IMR-90 (cell line): ENCODE measurements at regions of chr1 and their contacts with region 1.

Region 1: GRCh38 chr1:181479137-181479745 is 4.1 kb upstream of the CACNA1E start:
- DNase-seq: peak; percentile 71
- ATAC-seq: peak; percentile 95
- H3K4me3 ChIP-seq: no peak overlapping the region
- H3K27ac ChIP-seq: no peak overlapping the region
- H3K4me1 ChIP-seq: no peaks in the 10 kb centered on the region
- H3K27me3 ChIP-seq: peaks cover 31% of the 10 kb centered on the region
- CTCF ChIP-seq: peak; percentile 76
- POLR2A ChIP-seq: no peak
- RAD21 ChIP-seq: peak; percentile 77

Region 2: GRCh38 chr1:181504399-181504842 is 25.2 kb after region 1 on chr1:
- CTCF ChIA-PET with region 1: no interaction called
- POLR2A ChIA-PET with region 1: no interaction called
- dilution Hi-C with region 1: no loop called
- in situ Hi-C with region 1: no loop called
- intact Hi-C with region 1: loop called (anchors 1 kb)
- DNase-seq: peak; percentile 28
- ATAC-seq: no peak
- H3K4me3 ChIP-seq: no peak overlapping the region
- H3K27ac ChIP-seq: no peak overlapping the region
- H3K4me1 ChIP-seq: no peaks in the 10 kb centered on the region
- H3K27me3 ChIP-seq: no peaks in the 10 kb centered on the region
- CTCF ChIP-seq: peak; percentile 19; the same call in 1 of the 2 replicates
- POLR2A ChIP-seq: no peak
- RAD21 ChIP-seq: no peak

Region 3: GRCh38 chr1:181676269-181676668 is 197.0 kb after region 1 on chr1:
- CTCF ChIA-PET with region 1: interaction called, 3 read pairs
- POLR2A ChIA-PET with region 1: no interaction called
- dilution Hi-C with region 1: no loop called
- in situ Hi-C with region 1: loop called (anchors 10 kb)
- intact Hi-C with region 1: no loop called
- DNase-seq: peak; percentile 4
- ATAC-seq: no peak
- H3K4me3 ChIP-seq: no peak overlapping the region
- H3K27ac ChIP-seq: no peak overlapping the region
- H3K4me1 ChIP-seq: no peaks in the 10 kb centered on the region
- H3K27me3 ChIP-seq: no peaks in the 10 kb centered on the region
- CTCF ChIP-seq: peak; percentile 24; the same call in 1 of the 2 replicates
- POLR2A ChIP-seq: no peak
- RAD21 ChIP-seq: peak; percentile 20; the same call in 1 of the 2 replicates

Region 4: GRCh38 chr1:182084487-182085316 is 605.5 kb after region 1 on chr1:
- CTCF ChIA-PET with region 1: interaction called, 12 read pairs
- POLR2A ChIA-PET with region 1: no interaction called
- dilution Hi-C with region 1: no loop called
- in situ Hi-C with region 1: loop called (anchors 10 kb)
- intact Hi-C with region 1: loop called (anchors 1 kb)
- DNase-seq: peak; percentile 50
- ATAC-seq: peak; percentile 95
- H3K4me3 ChIP-seq: no peak overlapping the region
- H3K27ac ChIP-seq: no peak overlapping the region
- H3K4me1 ChIP-seq: no peaks in the 10 kb centered on the region
- H3K27me3 ChIP-seq: no peaks in the 10 kb centered on the region
- CTCF ChIP-seq: peak; percentile 62
- POLR2A ChIP-seq: no peak
- RAD21 ChIP-seq: peak; percentile 74

Region 5: GRCh38 chr1:182129398-182129797 is 650.2 kb after region 1 on chr1:
- CTCF ChIA-PET with region 1: no interaction called
- POLR2A ChIA-PET with region 1: no interaction called
- dilution Hi-C with region 1: no loop called
- in situ Hi-C with region 1: no loop called
- intact Hi-C with region 1: no loop called
- DNase-seq: no peak
- ATAC-seq: no peak
- H3K4me3 ChIP-seq: no peak overlapping the region
- H3K27ac ChIP-seq: no peak overlapping the region
- H3K4me1 ChIP-seq: no peaks in the 10 kb centered on the region
- H3K27me3 ChIP-seq: no peaks in the 10 kb centered on the region
- CTCF ChIP-seq: no peak
- POLR2A ChIP-seq: no peak
- RAD21 ChIP-seq: no peak

Region 6: GRCh38 chr1:182397771-182398393 is 918.6 kb after region 1 on chr1:
- CTCF ChIA-PET with region 1: no interaction called
- POLR2A ChIA-PET with region 1: no interaction called
- dilution Hi-C with region 1: no loop called
- in situ Hi-C with region 1: loop called (anchors 5 kb)
- intact Hi-C with region 1: loop called (anchors 1 kb)
- DNase-seq: peak; percentile 33
- ATAC-seq: no peak; the same call in 1 of the 2 replicates
- H3K4me3 ChIP-seq: no peak overlapping the region
- H3K27ac ChIP-seq: no peak overlapping the region
- H3K4me1 ChIP-seq: no peaks in the 10 kb centered on the region; the same call in none of the 2 replicates
- H3K27me3 ChIP-seq: no peaks in the 10 kb centered on the region
- CTCF ChIP-seq: no peak
- POLR2A ChIP-seq: no peak
- RAD21 ChIP-seq: no peak

Region 7: DNA sequence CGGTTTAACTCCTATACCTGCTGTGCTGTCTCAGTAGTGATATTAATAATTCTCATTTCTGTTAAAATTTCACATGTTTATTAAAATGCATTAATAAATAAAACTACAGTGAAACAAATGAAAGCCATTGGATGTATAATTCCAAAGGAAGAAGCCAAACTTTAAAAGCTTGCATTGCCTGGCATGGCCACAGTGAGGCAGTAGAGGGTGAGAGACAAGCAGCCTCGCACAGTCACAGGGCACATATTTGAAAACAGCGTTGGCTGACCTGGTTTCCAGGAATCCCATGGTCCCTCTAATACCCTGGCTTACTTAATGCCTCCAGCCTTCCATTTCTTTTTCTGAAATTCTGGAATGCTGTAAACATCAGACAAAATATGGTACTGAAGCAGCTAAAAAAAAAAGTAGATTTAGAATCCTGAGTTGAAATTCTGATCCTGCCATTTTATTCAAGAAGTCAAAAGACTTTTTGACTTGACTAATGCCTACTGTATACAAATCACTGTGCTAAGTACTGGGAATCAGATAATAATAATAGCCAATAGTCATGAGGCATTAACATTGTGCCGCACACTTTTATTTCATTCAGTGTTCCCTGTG is 1116.5 kb after region 1 on chr1:
- CTCF ChIA-PET with region 1: no interaction called
- POLR2A ChIA-PET with region 1: no interaction called
- dilution Hi-C with region 1: no loop called
- in situ Hi-C with region 1: no loop called
- intact Hi-C with region 1: loop called (anchors 2 kb)
- DNase-seq: peak; percentile 69
- ATAC-seq: peak; percentile 92
- H3K4me3 ChIP-seq: no peak overlapping the region
- H3K27ac ChIP-seq: no peak overlapping the region
- H3K4me1 ChIP-seq: no peaks in the 10 kb centered on the region; the same call in 1 of the 2 replicates
- H3K27me3 ChIP-seq: peaks cover 12% of the 10 kb centered on the region; the same call in 1 of the 2 replicates
- CTCF ChIP-seq: peak; percentile 84
- POLR2A ChIP-seq: no peak
- RAD21 ChIP-seq: peak; percentile 67

Region 8: GRCh38 chr1:182789138-182790076 is 1310.2 kb after region 1 on chr1 and contains the start of gene NPL:
- CTCF ChIA-PET with region 1: interaction called, 3 read pairs
- POLR2A ChIA-PET with region 1: no interaction called
- dilution Hi-C with region 1: no loop called
- in situ Hi-C with region 1: no loop called
- intact Hi-C with region 1: loop called (anchors 5 kb)
- DNase-seq: peak; percentile 50
- ATAC-seq: peak; percentile 96
- H3K4me3 ChIP-seq: peak within 1 kb of the TSS; percentile 79
- H3K27ac ChIP-seq: no peak within 1 kb of the TSS
- H3K4me1 ChIP-seq: no peaks in the 10 kb centered on the region
- H3K27me3 ChIP-seq: peaks cover 35% of the 10 kb centered on the region
- CTCF ChIP-seq: no peak
- POLR2A ChIP-seq: 0 out of 2 replicates have a peak, but pooled peaks have one; percentile 37
- RAD21 ChIP-seq: no peak
- total RNA-seq, gene NPL: 0.36 and 0.83 TPM in 2 replicates